ENCODE measurements at regions of chr16 and their contacts with region 1.

Region 1: DNA sequence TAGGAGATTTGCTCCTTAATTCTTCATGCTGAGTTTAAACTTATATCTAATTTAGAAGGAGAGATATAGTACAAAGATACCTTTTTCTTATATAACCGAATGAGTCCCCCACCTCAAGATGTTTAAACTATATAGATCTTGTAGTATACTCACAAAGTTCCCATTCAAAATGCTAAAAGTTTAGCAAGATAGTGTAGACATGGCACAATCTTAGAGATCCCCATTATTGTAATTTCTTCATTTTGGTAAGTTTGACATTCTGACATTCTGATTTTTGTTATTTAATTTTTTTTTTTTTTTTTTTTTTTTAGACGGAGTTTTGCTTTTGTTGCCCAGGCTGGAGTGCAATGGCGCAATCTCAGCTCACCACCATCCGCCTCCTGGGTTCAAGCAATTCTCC is 22.8 kb downstream of the SNTB2 start:
- DNase-seq: no peak
- H3K4me3 Mint-ChIP-seq: no peak overlapping the region
- H3K27ac Mint-ChIP-seq: no peak overlapping the region
- H3K4me1 Mint-ChIP-seq: peaks cover 7% of the 10 kb centered on the region
- H3K27me3 Mint-ChIP-seq: no peaks in the 10 kb centered on the region

Region 2: GRCh38 chr16:69179328-69180010 is 30.3 kb before region 1 on chr16:
- CTCF ChIA-PET with region 1: no interaction called
- intact Hi-C with region 1: no loop called
- DNase-seq: no peak
- H3K4me3 Mint-ChIP-seq: no peak overlapping the region
- H3K27ac Mint-ChIP-seq: no peak overlapping the region
- H3K4me1 Mint-ChIP-seq: peaks cover 4% of the 10 kb centered on the region
- H3K27me3 Mint-ChIP-seq: no peaks in the 10 kb centered on the region

Region 3: DNA sequence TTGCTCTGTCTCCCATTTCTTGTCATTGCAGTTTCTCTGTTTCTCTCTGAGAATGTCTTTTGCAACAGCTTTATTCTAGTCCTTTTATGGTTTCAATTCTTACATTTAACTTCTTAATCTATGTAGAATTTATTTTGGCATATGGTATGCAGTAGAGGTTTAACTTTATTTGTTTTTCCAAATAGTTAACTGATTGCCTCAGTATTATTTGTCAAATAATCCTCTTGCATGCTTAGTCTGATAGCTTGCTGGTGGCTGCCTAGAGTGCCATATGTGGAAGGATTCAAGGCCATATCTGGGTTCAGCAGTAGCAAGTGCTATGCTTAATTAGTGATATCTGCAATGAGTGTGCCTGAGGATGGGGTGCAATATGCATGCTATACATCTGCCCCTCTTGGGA is 15.9 kb before region 1 on chr16:
- CTCF ChIA-PET with region 1: interaction called, 11 read pairs
- intact Hi-C with region 1: no loop called
- DNase-seq: no peak
- H3K4me3 Mint-ChIP-seq: no peak overlapping the region
- H3K27ac Mint-ChIP-seq: no peak overlapping the region
- H3K4me1 Mint-ChIP-seq: peaks cover 16% of the 10 kb centered on the region
- H3K27me3 Mint-ChIP-seq: no peaks in the 10 kb centered on the region